Activated naive CD4-positive, alpha-beta T cell treated with anti-CD3 and anti-CD28 coated beads for 36 hours (primary cell): ENCODE measurements at regions of chr14 and their contacts with region 1.

Region 1: GRCh38 chr14:62126879-62127478 is 364.8 kb downstream of the SNAPC1 start:
- DNase-seq: peak; percentile 5
- H3K4me3 Mint-ChIP-seq: no peak overlapping the region
- H3K27ac Mint-ChIP-seq: no peak overlapping the region
- H3K4me1 Mint-ChIP-seq: no peaks in the 10 kb centered on the region
- H3K27me3 Mint-ChIP-seq: peaks cover 29% of the 10 kb centered on the region

Region 2: DNA sequence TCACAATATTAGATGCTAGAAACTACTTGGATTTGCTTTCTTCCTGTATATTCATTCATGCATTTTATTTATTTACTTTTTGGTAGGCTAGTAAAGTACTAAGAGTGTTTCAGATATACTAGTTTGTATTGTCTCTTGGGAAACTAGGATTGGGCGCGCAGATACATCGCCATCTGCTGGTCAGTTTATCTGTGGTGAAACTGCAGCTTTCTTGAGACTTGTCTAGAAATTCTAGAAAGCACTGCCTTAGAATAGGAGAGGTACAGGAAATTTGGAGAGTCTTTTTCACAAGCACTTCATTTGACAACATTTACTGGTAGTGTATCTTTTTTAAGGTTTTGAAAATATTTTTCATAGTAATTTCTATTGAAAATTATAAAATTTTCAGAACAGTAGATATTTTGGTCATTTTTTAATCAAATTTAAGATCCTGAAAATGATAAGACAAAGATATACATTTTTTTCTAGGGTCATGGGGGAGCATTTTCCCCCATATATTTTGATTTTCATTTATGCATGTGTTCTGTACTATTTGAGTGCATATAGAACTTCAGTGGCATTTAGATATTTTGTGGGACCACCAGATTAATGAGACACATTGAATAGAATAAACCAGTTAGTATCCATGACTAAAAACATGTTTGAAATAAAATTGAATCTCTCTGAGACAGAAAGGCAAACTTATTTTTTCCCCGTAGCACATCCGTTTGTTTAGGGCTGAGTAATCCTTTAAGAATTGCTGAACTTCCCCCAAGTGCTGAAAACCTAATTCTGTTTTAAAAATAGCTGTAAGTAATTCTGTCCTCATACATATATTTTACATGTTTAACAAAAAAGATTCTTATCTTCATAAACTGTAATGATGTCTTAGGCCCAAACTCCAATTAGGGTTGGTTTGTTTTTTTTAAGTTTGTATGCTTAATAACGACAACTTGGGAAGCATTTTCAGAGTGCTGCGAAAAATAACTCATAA is 1101.4 kb before region 1 on chr14:
- CTCF ChIA-PET with region 1: no interaction called
- intact Hi-C with region 1: no loop called
- DNase-seq: peak; percentile 76
- H3K4me3 Mint-ChIP-seq: no peak overlapping the region
- H3K27ac Mint-ChIP-seq: no peak overlapping the region
- H3K4me1 Mint-ChIP-seq: no peaks in the 10 kb centered on the region
- H3K27me3 Mint-ChIP-seq: no peaks in the 10 kb centered on the region

Region 3: GRCh38 chr14:61461808-61462275 is 665.1 kb before region 1 on chr14:
- CTCF ChIA-PET with region 1: interaction called, 3 read pairs
- intact Hi-C with region 1: loop called (anchors 1 kb)
- DNase-seq: peak; percentile 60
- H3K4me3 Mint-ChIP-seq: peak overlapping the region; percentile 27
- H3K27ac Mint-ChIP-seq: peak overlapping the region; percentile 93
- H3K4me1 Mint-ChIP-seq: peaks cover 71% of the 10 kb centered on the region
- H3K27me3 Mint-ChIP-seq: no peaks in the 10 kb centered on the region

Region 4: DNA sequence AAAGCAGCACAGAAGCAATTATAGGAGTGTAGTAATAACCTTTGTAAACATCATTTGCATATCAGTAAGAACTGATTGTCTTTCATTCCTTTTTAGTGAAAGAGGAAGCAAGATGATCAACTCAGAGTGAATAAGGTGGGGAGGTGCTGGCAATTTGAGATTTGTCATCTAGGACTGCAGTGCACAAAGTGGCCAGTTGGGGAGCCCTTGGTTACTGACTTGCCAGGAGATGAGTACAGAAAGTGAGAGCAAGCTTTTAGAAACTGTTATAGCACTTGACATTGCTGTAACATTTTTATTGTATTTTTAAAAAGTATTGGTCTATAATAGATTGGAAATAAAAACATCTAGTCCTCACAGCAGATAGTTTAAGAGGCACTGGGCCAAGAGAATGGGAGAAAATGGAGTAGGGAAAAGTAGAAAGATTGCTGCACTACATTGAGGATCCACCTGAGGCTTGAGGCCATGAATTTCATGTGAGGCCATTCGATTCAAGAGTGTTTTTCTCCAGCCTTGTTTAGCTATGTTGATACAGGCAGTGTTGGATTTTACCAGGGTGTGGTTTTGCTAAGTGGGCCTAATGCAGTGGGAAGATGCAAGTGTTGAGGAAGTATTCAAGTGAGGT is 266.6 kb before region 1 on chr14:
- CTCF ChIA-PET with region 1: interaction called, 18 read pairs
- intact Hi-C with region 1: loop called (anchors 1 kb)
- DNase-seq: peak; percentile 91
- H3K4me3 Mint-ChIP-seq: no peak overlapping the region
- H3K27ac Mint-ChIP-seq: no peak overlapping the region
- H3K4me1 Mint-ChIP-seq: no peaks in the 10 kb centered on the region
- H3K27me3 Mint-ChIP-seq: peaks cover 2% of the 10 kb centered on the region

Region 5: DNA sequence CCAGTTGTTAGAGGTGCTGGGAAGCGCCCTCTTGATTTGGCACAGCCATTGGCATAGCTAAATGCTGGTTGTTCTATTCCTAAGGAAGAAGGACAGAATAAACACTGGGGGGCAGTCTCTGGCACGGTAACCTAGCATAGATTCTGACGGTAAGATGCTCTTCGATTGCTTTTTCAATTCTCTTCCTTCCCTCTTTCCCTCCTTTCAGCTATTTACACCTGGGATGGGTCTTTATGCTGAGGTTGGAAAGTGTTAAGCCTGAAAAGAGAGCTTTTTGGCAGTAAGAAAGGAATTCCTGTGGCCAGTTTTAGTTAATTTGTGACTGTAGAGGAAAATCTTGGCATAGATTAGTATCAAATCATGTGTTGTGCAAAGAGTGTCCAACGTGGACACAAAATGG is 201.9 kb before region 1 on chr14:
- CTCF ChIA-PET with region 1: interaction called, 70 read pairs
- intact Hi-C with region 1: loop called (anchors 1 kb)
- DNase-seq: peak; percentile 45
- H3K4me3 Mint-ChIP-seq: no peak overlapping the region
- H3K27ac Mint-ChIP-seq: no peak overlapping the region
- H3K4me1 Mint-ChIP-seq: no peaks in the 10 kb centered on the region
- H3K27me3 Mint-ChIP-seq: peaks cover 18% of the 10 kb centered on the region

Region 6: DNA sequence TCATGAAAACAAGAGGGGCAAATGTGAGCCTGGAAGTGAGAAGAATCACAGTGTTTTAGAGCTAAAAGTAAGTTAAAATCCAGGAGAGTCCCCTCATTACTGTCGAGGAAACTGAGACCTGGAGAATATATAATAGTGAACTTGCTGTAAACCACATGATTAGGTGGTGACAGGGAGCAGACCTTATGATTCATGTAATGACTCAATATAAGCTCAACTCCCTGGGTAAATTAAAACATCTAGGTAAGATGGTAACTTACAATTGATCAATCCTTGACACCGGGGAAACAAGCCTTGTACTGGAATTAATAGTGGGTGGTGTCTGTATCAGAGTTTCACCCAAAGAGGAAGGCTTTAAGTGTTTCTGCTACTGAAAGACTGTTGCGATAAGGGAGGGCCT is 95.5 kb before region 1 on chr14:
- CTCF ChIA-PET with region 1: interaction called, 10 read pairs
- intact Hi-C with region 1: no loop called
- DNase-seq: no peak
- H3K4me3 Mint-ChIP-seq: no peak overlapping the region
- H3K27ac Mint-ChIP-seq: no peak overlapping the region
- H3K4me1 Mint-ChIP-seq: peaks cover 3% of the 10 kb centered on the region
- H3K27me3 Mint-ChIP-seq: peaks cover 20% of the 10 kb centered on the region

Region 7: DNA sequence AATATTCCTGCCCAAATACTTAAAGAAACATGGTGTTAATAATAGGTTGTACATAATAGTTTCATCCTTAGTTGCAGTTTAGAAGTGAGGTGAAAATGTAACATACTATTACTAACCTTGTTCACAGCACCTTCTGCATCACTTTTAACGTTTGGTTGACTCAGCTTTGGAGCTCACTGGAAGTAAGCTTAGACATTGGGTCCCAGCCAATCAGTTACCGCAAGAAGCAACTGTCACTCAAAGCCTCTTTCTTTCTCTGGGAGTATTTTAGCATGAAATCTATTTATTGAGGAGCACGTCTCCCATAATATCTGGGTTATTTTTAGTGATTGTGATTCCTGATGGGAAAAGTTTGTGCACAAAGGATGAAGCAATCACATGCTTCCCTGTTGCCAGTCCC is 107.9 kb after region 1 on chr14:
- CTCF ChIA-PET with region 1: no interaction called
- intact Hi-C with region 1: no loop called
- DNase-seq: no peak
- H3K4me3 Mint-ChIP-seq: no peak overlapping the region
- H3K27ac Mint-ChIP-seq: no peak overlapping the region
- H3K4me1 Mint-ChIP-seq: no peaks in the 10 kb centered on the region
- H3K27me3 Mint-ChIP-seq: no peaks in the 10 kb centered on the region

Region 8: DNA sequence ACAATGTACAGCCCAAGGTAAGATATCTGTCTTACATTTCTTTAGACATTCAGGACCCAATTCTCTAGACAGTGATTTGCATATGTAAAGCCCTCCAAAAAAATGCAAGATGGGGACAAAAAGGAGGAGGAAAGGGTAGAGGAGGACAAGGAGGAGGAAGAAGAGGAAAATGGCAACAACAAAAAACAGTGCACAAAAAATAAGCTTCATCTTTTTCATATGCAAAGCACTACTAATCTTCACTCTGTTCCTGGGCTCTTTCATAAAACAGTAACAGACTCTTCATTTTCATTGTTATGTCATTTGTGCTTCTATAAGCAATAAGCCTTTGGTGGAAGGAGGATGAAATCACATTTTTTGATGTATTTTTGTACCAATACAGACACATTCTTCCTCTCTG is 856.8 kb after region 1 on chr14:
- CTCF ChIA-PET with region 1: no interaction called
- intact Hi-C with region 1: no loop called
- DNase-seq: no peak
- H3K4me3 Mint-ChIP-seq: no peak overlapping the region
- H3K27ac Mint-ChIP-seq: no peak overlapping the region
- H3K4me1 Mint-ChIP-seq: no peaks in the 10 kb centered on the region
- H3K27me3 Mint-ChIP-seq: no peaks in the 10 kb centered on the region